WTC11 (cell line): ENCODE measurements at regions of chr7 and their contacts with region 1.

Region 1: GRCh38 chr7:107501593-107501992 is 31.7 kb downstream of the GPR22 start:
- DNase-seq: peak; percentile 21
- ATAC-seq: 0 out of 2 replicates have a peak, but pooled peaks have one; percentile 56
- H3K4me3 Mint-ChIP-seq: no peak overlapping the region
- H3K27ac Mint-ChIP-seq: no peak overlapping the region
- H3K4me1 Mint-ChIP-seq: no peaks in the 10 kb centered on the region; the same call in 1 of the 2 replicates
- H3K27me3 Mint-ChIP-seq: no peaks in the 10 kb centered on the region
- CTCF ChIP-seq: no peak

Region 2: DNA sequence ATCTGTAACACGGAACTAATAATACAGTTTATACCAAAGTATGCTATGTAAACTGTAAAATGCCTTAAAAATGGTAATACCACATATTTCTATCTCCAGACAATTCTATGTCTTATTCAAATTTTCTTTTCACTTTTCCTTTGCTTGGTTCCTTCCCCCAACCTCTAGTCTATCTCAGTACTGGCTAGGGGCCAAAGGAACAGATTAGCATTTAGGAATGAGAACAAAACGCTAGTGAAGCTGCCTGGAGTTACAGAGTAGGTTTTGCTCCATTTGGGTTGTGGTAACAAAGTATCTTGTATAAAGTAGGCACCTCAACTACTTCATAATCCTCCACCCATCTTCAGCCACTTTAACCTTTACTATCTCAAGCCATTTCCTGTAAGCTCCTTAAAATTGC is 238.7 kb before region 1 on chr7:
- CTCF ChIA-PET with region 1: no interaction called
- POLR2A ChIA-PET with region 1: no interaction called
- DNase-seq: no peak
- ATAC-seq: no peak
- H3K4me3 Mint-ChIP-seq: no peak overlapping the region
- H3K27ac Mint-ChIP-seq: no peak overlapping the region
- H3K4me1 Mint-ChIP-seq: 0 out of 2 replicates have a peak, but pooled peaks cover 4% of the 10 kb centered on the region
- H3K27me3 Mint-ChIP-seq: no peaks in the 10 kb centered on the region
- CTCF ChIP-seq: no peak

Region 3: DNA sequence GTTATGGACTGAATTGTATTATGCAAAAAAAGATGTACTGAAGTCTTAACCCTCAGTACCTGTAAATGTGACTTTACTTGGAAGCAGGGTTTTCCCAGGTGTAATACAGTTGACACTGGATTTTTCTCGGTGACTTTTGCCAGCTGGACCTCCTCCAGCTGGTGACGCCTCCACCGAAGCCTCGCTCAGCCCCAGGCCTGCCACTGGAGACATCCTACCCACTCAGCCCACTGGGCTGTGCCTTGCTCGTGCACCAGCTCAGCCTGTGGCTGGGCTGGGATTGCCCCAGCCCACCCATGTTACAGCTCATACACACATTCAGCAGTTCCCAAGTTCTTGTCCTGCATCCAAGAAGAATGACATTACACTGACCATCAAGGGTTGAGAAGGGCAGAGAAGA is 74.1 kb before region 1 on chr7:
- CTCF ChIA-PET with region 1: no interaction called
- POLR2A ChIA-PET with region 1: no interaction called
- DNase-seq: no peak
- ATAC-seq: no peak
- H3K4me3 Mint-ChIP-seq: no peak overlapping the region
- H3K27ac Mint-ChIP-seq: no peak overlapping the region
- H3K4me1 Mint-ChIP-seq: 0 out of 2 replicates have a peak, but pooled peaks cover 4% of the 10 kb centered on the region
- H3K27me3 Mint-ChIP-seq: no peaks in the 10 kb centered on the region
- CTCF ChIP-seq: no peak

Region 4: DNA sequence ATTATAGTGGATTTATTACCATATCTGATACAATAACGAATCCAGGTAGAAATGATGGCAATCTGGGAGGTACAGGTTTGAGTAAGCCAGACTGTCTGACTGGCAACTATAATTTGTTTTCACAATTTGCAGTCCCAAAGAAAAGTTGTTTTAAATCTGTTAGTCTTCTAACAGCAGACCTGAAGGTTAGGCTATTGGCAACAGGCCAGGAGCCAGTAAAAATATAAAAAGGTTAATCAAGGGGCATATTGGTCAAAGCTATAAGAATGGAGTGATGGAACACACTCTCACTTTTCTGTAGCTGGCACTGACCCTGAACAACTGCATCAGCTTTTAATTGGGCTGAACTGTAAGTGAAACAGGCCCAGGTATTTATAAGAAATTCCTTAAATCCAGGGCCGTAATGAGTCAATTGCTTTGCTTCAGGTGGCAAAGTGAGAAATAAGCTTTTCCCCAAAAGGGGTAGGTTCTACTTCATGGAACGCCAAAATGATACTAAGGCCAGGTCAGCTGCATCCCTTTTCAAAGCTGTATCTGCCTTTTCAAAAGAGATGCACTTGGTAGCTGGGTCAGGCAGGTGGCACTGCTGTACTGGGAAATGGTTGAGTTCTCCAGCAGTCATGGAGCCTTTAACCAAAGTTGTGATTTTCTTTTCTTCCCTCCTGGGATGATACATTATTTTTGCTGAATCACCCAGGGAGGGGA is 38.7 kb before region 1 on chr7:
- CTCF ChIA-PET with region 1: interaction called, 17 read pairs
- POLR2A ChIA-PET with region 1: no interaction called
- DNase-seq: peak; percentile 52
- ATAC-seq: peak; percentile 95
- H3K4me3 Mint-ChIP-seq: no peak overlapping the region
- H3K27ac Mint-ChIP-seq: no peak overlapping the region
- H3K4me1 Mint-ChIP-seq: peaks cover 16% of the 10 kb centered on the region
- H3K27me3 Mint-ChIP-seq: no peaks in the 10 kb centered on the region
- CTCF ChIP-seq: peak; percentile 32; the same call in 1 of the 2 replicates

Region 5: DNA sequence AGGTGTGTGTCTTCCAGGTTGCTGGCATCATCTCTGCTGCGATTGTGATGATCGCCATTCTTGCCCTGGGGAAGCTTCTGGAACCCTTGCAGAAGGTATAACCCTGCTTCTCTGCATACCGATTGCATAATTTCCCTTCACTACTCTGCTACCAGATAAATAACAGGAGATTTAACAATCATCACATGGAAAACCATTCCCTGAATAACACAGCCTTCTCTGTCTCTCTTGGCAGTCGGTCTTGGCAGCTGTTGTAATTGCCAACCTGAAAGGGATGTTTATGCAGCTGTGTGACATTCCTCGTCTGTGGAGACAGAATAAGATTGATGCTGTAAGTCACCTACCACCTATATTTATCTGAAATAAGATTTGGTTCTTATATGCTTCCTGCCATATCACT is 192.8 kb after region 1 on chr7:
- CTCF ChIA-PET with region 1: no interaction called
- POLR2A ChIA-PET with region 1: no interaction called
- DNase-seq: no peak
- ATAC-seq: no peak
- H3K4me3 Mint-ChIP-seq: no peak overlapping the region
- H3K27ac Mint-ChIP-seq: no peak overlapping the region
- H3K4me1 Mint-ChIP-seq: peaks cover 50% of the 10 kb centered on the region
- H3K27me3 Mint-ChIP-seq: no peaks in the 10 kb centered on the region
- CTCF ChIP-seq: no peak